AG04450 (cell line): ENCODE measurements at regions of chr1 and their contacts with region 1.

Region 1: DNA sequence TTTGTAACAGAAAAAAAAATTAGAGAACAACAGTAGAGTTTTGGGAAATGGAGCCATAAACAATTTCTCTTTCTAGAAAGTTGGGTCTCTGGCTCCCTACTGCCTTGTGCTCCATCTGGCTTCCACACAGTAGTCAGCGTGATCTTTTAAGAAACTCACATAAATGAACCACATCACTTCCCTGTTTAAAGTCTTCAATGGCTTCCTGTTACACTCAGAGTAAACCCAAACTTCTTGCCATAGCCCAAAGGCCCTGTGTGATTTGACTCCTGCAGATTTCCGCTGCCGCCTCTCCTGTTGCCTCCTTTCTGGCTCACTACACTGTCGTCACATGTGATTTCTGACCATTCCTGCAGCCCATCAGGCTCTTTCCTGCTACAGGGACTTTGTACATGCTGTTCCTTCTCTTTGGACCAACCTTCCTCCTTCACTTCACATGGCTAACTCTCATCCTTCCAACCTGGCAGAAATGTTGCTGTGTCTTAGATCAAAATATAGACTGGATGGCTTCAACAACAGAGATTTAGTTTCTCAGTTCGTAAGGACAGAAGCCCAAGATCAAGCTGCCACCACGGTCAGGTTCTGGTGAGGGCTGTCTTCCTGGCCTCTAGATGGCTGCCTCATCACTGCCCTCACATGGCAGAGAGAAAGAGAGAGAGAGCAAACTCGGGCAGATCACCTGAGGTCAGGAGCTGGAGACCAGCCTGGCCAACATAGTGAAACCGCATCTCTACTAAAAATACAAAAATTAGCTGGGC is 34.0 kb downstream of the OPRD1 start:
- DNase-seq: no peak
- H3K4me3 ChIP-seq: no peak overlapping the region
- H3K27ac ChIP-seq: no peak overlapping the region
- H3K27me3 ChIP-seq: peaks cover 5% of the 10 kb centered on the region
- CTCF ChIP-seq: peak; percentile 29; the same call in 1 of the 2 replicates

Region 2: GRCh38 chr1:28494737-28495136 is 351.2 kb before region 1 on chr1:
- CTCF ChIA-PET with region 1: no interaction called
- POLR2A ChIA-PET with region 1: no interaction called
- DNase-seq: no peak
- H3K4me3 ChIP-seq: no peak overlapping the region
- H3K27ac ChIP-seq: no peak overlapping the region
- H3K27me3 ChIP-seq: no peaks in the 10 kb centered on the region
- CTCF ChIP-seq: no peak

Region 3: DNA sequence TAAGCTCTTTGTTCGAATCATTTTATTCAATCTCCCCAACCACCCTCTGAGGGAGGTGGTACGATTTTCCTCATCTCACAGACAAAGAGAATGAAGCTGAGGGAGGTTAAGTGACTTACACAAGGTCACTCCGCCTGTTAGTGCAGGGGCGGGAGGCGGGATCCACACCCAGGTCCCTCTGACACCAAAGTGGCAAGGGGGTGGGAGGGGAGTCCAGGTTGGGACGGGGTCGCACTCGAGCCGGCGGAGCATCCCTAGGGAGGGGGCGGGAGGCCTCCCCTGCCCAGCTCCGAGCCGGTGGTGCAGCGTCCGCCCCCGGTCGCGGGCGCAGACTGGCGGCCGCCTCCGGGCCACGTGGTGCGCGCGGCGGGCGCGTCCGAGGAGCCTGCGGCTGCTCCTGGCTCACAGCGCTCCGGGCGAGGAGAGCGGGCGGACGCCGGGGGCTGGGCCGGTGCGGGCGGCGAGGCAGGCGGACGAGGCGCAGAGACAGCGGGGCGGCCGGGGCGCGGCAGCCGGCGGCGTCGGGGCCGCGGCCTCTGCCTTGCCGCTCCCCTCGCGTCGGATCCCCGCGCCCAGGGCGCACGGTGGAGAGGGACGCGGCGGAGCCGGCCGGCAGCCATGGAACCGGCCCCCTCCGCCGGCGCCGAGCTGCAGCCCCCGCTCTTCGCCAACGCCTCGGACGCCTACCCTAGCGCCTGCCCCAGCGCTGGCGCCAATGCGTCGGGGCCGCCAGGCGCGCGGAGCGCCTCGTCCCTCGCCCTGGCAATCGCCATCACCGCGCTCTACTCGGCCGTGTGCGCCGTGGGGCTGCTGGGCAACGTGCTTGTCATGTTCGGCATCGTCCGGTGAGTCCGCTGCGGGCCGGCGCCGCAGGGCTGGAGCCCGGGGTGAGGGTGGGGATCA is 33.9 kb before region 1 on chr1 and contains the start of gene OPRD1:
- CTCF ChIA-PET with region 1: no interaction called
- POLR2A ChIA-PET with region 1: interaction called, 10 read pairs
- DNase-seq: no peak
- H3K4me3 ChIP-seq: no peak within 1 kb of the TSS
- H3K27ac ChIP-seq: no peak within 1 kb of the TSS
- H3K27me3 ChIP-seq: peaks cover 59% of the 10 kb centered on the region
- CTCF ChIP-seq: no peak
- polyA plus RNA-seq, gene OPRD1: not detected in 2 replicates

Region 4: GRCh38 chr1:28860332-28861073 is 14.5 kb after region 1 on chr1:
- CTCF ChIA-PET with region 1: no interaction called
- POLR2A ChIA-PET with region 1: no interaction called
- DNase-seq: no peak
- H3K4me3 ChIP-seq: no peak overlapping the region
- H3K27ac ChIP-seq: no peak overlapping the region
- H3K27me3 ChIP-seq: peaks cover 26% of the 10 kb centered on the region
- CTCF ChIP-seq: no peak

Region 5: GRCh38 chr1:29077155-29077554 is 231.2 kb after region 1 on chr1:
- CTCF ChIA-PET with region 1: no interaction called
- POLR2A ChIA-PET with region 1: no interaction called
- DNase-seq: no peak
- H3K4me3 ChIP-seq: no peak overlapping the region
- H3K27ac ChIP-seq: no peak overlapping the region
- H3K27me3 ChIP-seq: no peaks in the 10 kb centered on the region
- CTCF ChIP-seq: no peak